ENCODE measurements at regions of chr2 and their contacts with region 1.

Region 1: GRCh38 chr2:177332041-177332991 is 60.3 kb upstream of the AGPS start:
- DNase-seq: peak; percentile 55
- ATAC-seq: peak; percentile 83
- H3K4me3 Mint-ChIP-seq: no peak overlapping the region
- H3K27ac Mint-ChIP-seq: peak overlapping the region; percentile 33
- H3K4me1 Mint-ChIP-seq: peaks cover 9% of the 10 kb centered on the region
- H3K27me3 Mint-ChIP-seq: no peaks in the 10 kb centered on the region

Region 2: DNA sequence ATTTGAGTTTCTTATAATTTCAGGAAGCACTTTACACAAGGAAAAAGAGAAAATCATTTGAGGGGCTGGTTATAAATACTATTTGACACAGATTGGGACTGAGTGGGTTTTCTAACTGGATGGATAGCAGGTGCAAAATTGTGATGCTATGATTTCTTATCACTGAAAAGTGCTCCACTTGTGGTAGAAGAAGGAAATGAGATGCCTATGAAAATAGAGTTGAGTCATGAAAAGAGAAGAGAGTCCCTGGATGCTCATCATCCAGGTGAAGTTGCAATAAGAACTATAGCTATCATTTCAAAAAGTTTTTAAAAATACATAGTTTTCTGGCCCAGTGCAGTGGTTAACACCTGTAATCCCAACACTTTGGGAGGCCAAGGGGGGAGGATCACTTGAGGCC is 28.4 kb before region 1 on chr2:
- CTCF ChIA-PET with region 1: no interaction called
- DNase-seq: no peak
- ATAC-seq: no peak
- H3K4me3 Mint-ChIP-seq: no peak overlapping the region
- H3K27ac Mint-ChIP-seq: no peak overlapping the region
- H3K4me1 Mint-ChIP-seq: peaks cover 12% of the 10 kb centered on the region
- H3K27me3 Mint-ChIP-seq: no peaks in the 10 kb centered on the region

Region 3: DNA sequence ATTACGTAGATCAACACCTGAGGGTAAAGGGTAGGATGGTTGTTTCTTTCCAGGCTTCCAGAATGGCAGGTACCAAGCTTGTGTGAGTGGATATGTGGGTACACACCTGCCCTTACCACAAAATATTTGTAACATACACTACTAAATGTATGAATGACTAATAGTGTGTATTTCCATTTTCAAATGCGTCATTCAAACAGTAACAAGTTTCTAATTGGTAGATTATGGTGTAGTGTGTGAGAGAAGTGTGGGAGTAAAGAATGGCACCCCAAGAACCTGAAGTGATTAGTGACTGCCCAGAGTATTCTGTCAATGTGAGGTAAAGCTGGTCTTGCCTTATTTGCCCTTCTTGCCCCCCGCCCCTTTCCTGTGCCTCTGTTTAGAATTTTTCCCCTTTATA is 81.4 kb after region 1 on chr2:
- CTCF ChIA-PET with region 1: interaction called, 47 read pairs
- DNase-seq: no peak
- ATAC-seq: no peak
- H3K4me3 Mint-ChIP-seq: no peak overlapping the region
- H3K27ac Mint-ChIP-seq: no peak overlapping the region
- H3K4me1 Mint-ChIP-seq: peaks cover 8% of the 10 kb centered on the region
- H3K27me3 Mint-ChIP-seq: no peaks in the 10 kb centered on the region

Region 4: GRCh38 chr2:177419274-177419673 is 87.0 kb after region 1 on chr2:
- CTCF ChIA-PET with region 1: interaction called, 47 read pairs
- DNase-seq: no peak
- ATAC-seq: no peak
- H3K4me3 Mint-ChIP-seq: no peak overlapping the region
- H3K27ac Mint-ChIP-seq: no peak overlapping the region
- H3K4me1 Mint-ChIP-seq: peaks cover 21% of the 10 kb centered on the region
- H3K27me3 Mint-ChIP-seq: no peaks in the 10 kb centered on the region

Region 5: DNA sequence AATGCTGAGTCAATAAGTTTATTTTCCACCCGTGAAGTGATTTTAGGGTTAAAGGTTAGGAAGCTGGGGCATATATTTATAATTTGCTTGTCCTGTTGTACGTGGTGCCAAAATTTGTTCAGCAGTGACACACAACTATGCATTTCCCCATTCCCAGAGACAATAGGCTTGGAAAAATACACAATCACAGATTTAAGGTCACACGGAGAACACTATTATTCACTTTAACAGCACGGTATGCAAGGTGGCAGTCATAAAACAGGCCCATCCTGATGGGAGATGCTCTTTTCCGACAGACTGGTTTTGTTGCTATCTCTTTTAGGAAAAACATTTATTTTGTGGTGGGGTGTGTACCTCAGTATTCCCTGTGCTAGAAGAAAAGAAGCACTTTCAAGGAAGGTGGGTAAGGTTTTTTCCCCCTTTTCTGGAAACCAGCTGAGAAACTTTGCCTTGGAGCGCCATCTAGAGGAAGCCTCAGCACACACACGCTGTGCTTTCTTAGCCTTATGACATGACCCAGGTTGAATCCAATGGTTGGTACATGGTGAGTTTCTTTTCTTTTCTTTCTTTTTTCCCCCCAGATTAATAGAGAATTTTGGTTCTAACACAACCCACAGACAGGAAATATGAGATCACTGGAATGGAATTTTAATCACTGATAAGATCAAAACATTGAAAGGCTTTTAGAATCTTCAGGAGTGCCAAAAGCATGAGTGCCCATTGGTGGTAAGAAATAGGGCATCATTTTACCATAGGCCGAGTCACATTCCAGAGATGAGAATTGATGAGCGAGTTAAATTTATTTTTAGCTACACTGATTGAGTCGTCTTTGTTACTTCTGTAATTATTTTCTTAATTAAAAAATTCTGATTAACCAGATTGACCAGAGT is 392.3 kb after region 1 on chr2:
- CTCF ChIA-PET with region 1: interaction called, 28 read pairs
- DNase-seq: peak; percentile 67
- ATAC-seq: peak; percentile 68
- H3K4me3 Mint-ChIP-seq: no peak overlapping the region
- H3K27ac Mint-ChIP-seq: no peak overlapping the region
- H3K4me1 Mint-ChIP-seq: no peaks in the 10 kb centered on the region
- H3K27me3 Mint-ChIP-seq: peaks cover 52% of the 10 kb centered on the region

Measured in activated CD8-positive, alpha-beta memory T cell treated with anti-CD3 and anti-CD28 coated beads, Interleukin-2, amount 10 ng/mL, durations not matched to agents 7 days and 5 days (primary cell).